ENCODE measurements at regions of chr19 and their contacts with region 1.

Region 1: DNA sequence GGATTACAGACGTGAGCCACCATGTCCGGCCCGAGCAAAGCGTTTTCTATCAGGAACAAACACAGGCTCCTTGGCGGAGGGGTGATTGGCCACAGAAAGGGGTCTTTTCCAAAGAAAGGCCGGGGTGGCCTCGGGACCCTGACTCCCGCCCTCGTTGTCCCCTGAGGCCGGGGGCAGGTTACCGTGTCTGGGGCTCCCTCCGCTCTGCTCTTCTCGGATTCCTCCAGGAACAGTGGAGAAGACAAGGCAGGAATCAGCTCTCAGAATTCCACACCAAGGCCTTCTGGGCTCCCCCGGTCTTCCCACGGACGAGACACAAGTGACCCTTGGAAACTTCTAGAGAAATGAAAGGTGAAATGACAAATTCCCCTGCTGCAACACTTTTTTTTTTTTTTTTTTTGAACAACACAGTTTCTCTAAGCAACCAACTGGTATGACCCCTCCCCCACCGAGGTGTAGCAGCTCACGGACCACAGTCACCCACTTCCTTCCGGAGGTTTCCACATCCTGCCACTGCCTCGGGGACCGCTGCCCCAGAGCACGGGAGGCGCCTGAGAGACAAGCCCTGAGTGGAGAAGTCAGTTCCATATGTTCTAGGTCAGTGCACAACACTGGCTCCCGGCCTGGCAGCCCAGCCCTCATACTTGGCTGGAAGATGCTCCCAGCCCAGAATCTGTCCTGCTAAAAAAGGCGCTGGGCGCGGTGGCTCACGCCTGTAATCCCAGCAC is 11.0 kb downstream of the MOB3A start:
- DNase-seq: peak; percentile 98
- ATAC-seq: peak; percentile 59
- H3K4me3 Mint-ChIP-seq: peak overlapping the region; percentile 99
- H3K27ac Mint-ChIP-seq: peak overlapping the region; percentile 98
- H3K4me1 Mint-ChIP-seq: peaks cover 64% of the 10 kb centered on the region
- H3K27me3 Mint-ChIP-seq: no peaks in the 10 kb centered on the region

Region 2: GRCh38 chr19:2050991-2051772 is 34.0 kb before region 1 on chr19 and contains the start of gene MKNK2:
- CTCF ChIA-PET with region 1: interaction called, 12 read pairs
- DNase-seq: peak; percentile 95
- ATAC-seq: peak; percentile 77
- H3K4me3 Mint-ChIP-seq: peak within 1 kb of the TSS; percentile 86
- H3K27ac Mint-ChIP-seq: peak within 1 kb of the TSS; percentile 94
- H3K4me1 Mint-ChIP-seq: peaks cover 49% of the 10 kb centered on the region
- H3K27me3 Mint-ChIP-seq: no peaks in the 10 kb centered on the region
- total RNA-seq, gene MKNK2: 196 to 201 TPM

Region 3: DNA sequence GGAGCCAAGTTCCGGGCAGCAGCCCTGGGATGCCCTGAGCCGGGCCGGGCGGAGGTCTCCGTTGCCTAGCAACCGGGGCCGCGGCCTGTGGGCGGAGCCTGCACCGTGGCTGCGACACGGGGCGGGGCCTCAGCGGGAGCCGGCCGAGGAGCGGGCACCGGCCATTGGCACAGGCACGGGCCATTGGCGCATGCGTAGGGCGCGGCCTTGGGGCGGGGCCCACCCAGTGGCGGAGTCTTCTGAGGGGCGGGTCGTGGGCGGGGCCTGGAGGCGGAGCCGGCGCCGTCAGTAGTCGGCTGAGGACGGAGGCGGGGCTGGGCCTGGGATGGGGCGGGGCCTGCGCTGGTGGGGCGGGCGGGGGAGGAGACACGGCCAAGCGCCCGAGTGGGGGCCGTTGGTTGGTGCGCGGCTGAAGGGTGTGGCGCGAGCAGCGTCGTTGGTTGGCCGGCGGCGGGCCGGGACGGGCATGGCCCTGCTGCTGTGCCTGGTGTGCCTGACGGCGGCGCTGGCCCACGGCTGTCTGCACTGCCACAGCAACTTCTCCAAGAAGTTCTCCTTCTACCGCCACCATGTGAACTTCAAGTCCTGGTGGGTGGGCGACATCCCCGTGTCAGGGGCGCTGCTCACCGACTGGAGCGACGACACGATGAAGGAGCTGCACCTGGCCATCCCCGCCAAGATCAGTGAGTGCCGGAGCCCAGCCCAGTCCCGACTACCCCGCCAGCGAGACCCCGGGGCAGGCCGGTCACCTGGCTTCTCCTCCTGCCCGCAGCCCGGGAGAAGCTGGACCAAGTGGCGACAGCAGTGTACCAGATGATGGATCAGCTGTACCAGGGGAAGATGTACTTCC is 11.5 kb after region 1 on chr19 and contains the start of gene IZUMO4:
- CTCF ChIA-PET with region 1: interaction called, 50 read pairs
- DNase-seq: peak; percentile 100
- ATAC-seq: peak; percentile 88
- H3K4me3 Mint-ChIP-seq: peak within 1 kb of the TSS; percentile 96
- H3K27ac Mint-ChIP-seq: peak within 1 kb of the TSS; percentile 90
- H3K4me1 Mint-ChIP-seq: peaks cover 33% of the 10 kb centered on the region
- H3K27me3 Mint-ChIP-seq: no peaks in the 10 kb centered on the region
- total RNA-seq, gene IZUMO4: 7.2 to 10.1 TPM

Measured in activated CD8-positive, alpha-beta memory T cell treated with anti-CD3 and anti-CD28 coated beads, Interleukin-2, amount 10 ng/mL, durations not matched to agents 7 days and 5 days (primary cell).